ENCODE measurements at regions of chr11 and their contacts with region 1.

Region 1: GRCh38 chr11:86802601-86803051 is 2.3 kb downstream of the PRSS23 start:
- DNase-seq: no peak
- H3K4me3 ChIP-seq: peak overlapping the region in 3 of 4 donors; percentile 63 to 79 (median 77)
- H3K27ac ChIP-seq: peak overlapping the region; percentile 79 to 90 (median 86)
- H3K4me1 ChIP-seq: peaks cover 4 to 43% (median 12%) of the 10 kb centered on the region in 4 donors
- H3K27me3 ChIP-seq: no peaks in the 10 kb centered on the region
- CTCF ChIP-seq: peak; percentile 51 to 79 (median 66)
- EP300 ChIP-seq: no peak
- POLR2A ChIP-seq: no peak

Region 2: GRCh38 chr11:86497181-86497701 is 305.4 kb before region 1 on chr11:
- in situ Hi-C with region 1: no loop called
- intact Hi-C with region 1: no loop called
- DNase-seq: no peak
- H3K4me3 ChIP-seq: no peak overlapping the region
- H3K27ac ChIP-seq: no peak overlapping the region
- H3K4me1 ChIP-seq: peaks cover 0 to 12% (median 0%) of the 10 kb centered on the region in 4 donors
- H3K27me3 ChIP-seq: no peaks in the 10 kb centered on the region
- CTCF ChIP-seq: no peak
- EP300 ChIP-seq: no peak
- POLR2A ChIP-seq: no peak

Region 3: DNA sequence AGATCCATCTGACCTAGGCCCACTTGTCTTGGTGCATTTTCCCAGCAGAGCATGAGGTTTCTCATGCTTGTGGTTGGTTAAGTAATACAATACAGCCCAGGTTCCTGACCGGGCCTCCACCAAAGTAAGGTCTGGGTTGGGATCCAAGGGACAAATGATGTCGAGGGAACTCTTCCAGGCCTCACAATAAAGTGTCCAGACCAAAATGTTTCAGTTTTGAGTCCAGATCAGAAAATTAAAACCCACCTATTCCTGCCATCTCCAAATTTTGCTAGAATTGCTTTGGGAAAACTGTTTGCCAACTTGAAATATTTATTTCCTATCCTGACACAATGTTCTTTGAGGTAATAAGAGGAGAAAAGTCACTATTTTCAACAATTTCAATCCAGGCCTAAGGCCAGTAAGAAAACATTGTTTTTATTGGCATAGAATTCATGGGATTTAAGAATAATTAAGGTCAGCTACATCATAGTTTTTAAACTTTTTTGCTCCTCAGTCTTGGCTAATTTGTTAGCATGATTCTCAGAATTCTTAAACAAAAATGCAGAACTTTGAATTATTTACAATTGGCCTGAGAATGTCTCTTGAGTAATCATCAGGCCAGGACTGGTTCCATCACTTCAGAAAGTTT is 181.6 kb before region 1 on chr11:
- in situ Hi-C with region 1: loop called in 1 of 4 experiments (anchors 25 kb)
- intact Hi-C with region 1: loop called (anchors 10 kb)
- DNase-seq: no peak
- H3K4me3 ChIP-seq: no peak overlapping the region
- H3K27ac ChIP-seq: peak overlapping the region; percentile 30 to 52 (median 40)
- H3K4me1 ChIP-seq: no peaks in the 10 kb centered on the region
- H3K27me3 ChIP-seq: no peaks in the 10 kb centered on the region
- CTCF ChIP-seq: no peak
- EP300 ChIP-seq: no peak
- POLR2A ChIP-seq: no peak

Region 4: GRCh38 chr11:86669424-86669823 is 133.2 kb before region 1 on chr11:
- in situ Hi-C with region 1: no loop called
- intact Hi-C with region 1: loop called (anchors 5 kb)
- DNase-seq: no peak
- H3K4me3 ChIP-seq: no peak overlapping the region
- H3K27ac ChIP-seq: peak overlapping the region; percentile 92 to 93 (median 92)
- H3K4me1 ChIP-seq: peaks cover 19 to 52% (median 37%) of the 10 kb centered on the region in 4 donors
- H3K27me3 ChIP-seq: no peaks in the 10 kb centered on the region
- CTCF ChIP-seq: no peak
- EP300 ChIP-seq: no peak
- POLR2A ChIP-seq: no peak

Region 5: DNA sequence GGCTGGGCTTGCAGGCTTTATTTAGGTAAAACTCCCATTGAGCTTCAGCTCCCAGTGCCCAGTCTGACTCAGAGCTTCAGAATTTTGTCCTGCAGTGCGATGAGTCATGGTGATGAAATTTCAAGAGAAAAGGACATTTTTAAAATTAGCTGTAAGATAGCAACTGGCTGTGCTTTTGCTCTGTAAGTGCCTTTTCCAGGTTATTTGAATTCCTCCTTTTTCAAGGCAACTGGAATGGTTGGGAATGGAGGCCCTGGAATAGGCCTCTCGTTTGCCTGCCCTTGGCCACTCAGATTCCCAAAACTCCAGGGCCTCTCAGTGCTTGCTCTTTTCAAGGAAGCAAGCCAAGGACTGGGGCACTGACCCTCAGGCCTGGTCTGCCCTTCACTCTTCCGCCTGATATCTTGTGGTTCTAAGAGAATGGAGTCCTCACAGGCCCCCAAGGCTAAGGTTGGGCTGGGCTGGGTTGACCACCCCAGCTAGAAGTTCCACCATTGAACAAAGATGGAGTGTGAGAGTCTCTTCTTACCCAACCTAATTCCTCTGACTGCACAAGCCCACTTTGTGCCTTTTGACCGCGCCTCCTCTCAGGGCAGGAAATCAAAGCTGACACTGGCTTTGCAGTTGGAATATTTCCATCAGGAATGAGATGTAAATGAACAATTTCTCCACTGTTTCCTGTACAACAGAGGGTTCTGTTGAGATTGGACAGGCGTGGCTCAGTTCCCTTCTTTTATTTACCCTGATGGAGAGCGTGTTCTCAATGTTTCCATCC is 61.7 kb before region 1 on chr11:
- in situ Hi-C with region 1: no loop called
- intact Hi-C with region 1: loop called (anchors 10 kb)
- DNase-seq: peak; percentile 32
- H3K4me3 ChIP-seq: no peak overlapping the region
- H3K27ac ChIP-seq: peak overlapping the region; percentile 81 to 90 (median 86)
- H3K4me1 ChIP-seq: peaks cover 8 to 29% (median 21%) of the 10 kb centered on the region in 4 donors
- H3K27me3 ChIP-seq: no peaks in the 10 kb centered on the region
- CTCF ChIP-seq: no peak
- EP300 ChIP-seq: no peak
- POLR2A ChIP-seq: no peak

Region 6: GRCh38 chr11:86888164-86889000 is 85.8 kb after region 1 on chr11:
- in situ Hi-C with region 1: no loop called
- intact Hi-C with region 1: no loop called
- DNase-seq: no peak
- H3K4me3 ChIP-seq: no peak overlapping the region
- H3K27ac ChIP-seq: no peak overlapping the region
- H3K4me1 ChIP-seq: no peaks in the 10 kb centered on the region
- H3K27me3 ChIP-seq: no peaks in the 10 kb centered on the region
- CTCF ChIP-seq: no peak
- EP300 ChIP-seq: no peak
- POLR2A ChIP-seq: no peak

Measured in transverse colon (tissue), 4 donors.